GM12878 (cell line): ENCODE measurements at regions of chr20 and their contacts with region 1.

Region 1: GRCh38 chr20:39133201-39133600 is 171.1 kb downstream of the DHX35 start:
- DNase-seq: no peak
- ATAC-seq: no peak
- H3K4me3 ChIP-seq: no peak overlapping the region
- H3K27ac ChIP-seq: no peak overlapping the region
- H3K4me1 ChIP-seq: no peaks in the 10 kb centered on the region
- H3K27me3 ChIP-seq: no peaks in the 10 kb centered on the region; a peak in 1 of 4 replicates
- CTCF ChIP-seq: no peak
- EP300 ChIP-seq: no peak
- POLR2A ChIP-seq: no peak
- RAD21 ChIP-seq: no peak

Region 2: GRCh38 chr20:39070484-39071231 is 62.5 kb before region 1 on chr20:
- CTCF ChIA-PET with region 1: no interaction called
- POLR2A ChIA-PET with region 1: no interaction called
- RAD21 ChIA-PET with region 1: no interaction called
- SMC1A ChIA-PET with region 1: no interaction called
- in situ Hi-C with region 1: no loop called
- intact Hi-C with region 1: loop called (anchors 10 kb)
- DNase-seq: no peak
- ATAC-seq: no peak
- H3K4me3 ChIP-seq: no peak overlapping the region
- H3K27ac ChIP-seq: no peak overlapping the region
- H3K4me1 ChIP-seq: no peaks in the 10 kb centered on the region
- H3K27me3 ChIP-seq: peaks cover 0 to 3% of the 10 kb centered on the region in 2 experiments; a peak in 3 of 4 replicates
- CTCF ChIP-seq: no peak
- EP300 ChIP-seq: no peak
- POLR2A ChIP-seq: no peak
- RAD21 ChIP-seq: no peak